Activated CD4-positive, alpha-beta T cell treated with anti-CD3 and anti-CD28 coated beads for 36 hours (primary cell): ENCODE measurements at regions of chr1 and their contacts with region 1.

Region 1: DNA sequence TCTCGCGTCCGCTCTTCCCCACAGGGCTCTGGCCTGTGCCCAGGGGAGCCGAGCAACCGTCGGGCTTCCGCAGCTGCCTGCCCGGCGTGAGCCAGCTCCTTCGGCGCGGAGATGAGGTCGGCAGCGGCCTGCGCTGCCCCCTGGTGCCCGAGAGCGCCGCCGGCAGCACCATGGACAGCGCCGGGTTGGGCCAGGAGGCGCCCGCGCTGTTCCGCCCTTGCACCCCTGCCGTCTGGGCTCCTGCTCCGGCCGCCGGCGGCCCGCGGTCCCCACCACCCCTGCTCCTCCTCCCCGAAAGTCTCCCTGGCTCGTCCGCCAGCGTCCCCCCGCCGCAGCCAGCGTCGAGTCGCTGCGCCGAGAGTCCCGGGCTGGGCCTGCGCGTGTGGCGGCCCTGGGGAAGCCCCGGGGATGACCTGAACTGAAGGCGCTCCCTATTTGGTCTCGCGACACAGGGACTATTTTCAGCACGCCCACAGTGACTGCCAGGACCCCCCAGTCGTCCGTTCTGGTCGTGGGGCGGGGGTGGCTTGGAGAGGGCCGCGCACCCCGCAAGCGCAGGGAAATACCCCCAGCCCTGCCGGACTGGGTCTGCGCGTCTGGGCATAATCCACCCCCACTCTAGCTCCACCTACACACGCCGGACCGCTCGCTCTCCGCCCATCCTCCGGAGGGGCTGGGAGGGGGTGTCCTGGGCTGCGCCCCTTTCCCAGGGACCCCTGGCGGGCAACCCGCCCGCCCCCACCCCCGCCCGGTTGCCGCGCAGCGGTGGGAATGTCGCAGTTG is 1.3 kb downstream of the HES3 start:
- DNase-seq: peak; percentile 90
- ATAC-seq: peak; percentile 71
- H3K4me3 Mint-ChIP-seq: no peak overlapping the region
- H3K27ac Mint-ChIP-seq: no peak overlapping the region
- H3K4me1 Mint-ChIP-seq: peaks cover 11% of the 10 kb centered on the region
- H3K27me3 Mint-ChIP-seq: peaks cover 53% of the 10 kb centered on the region

Region 2: GRCh38 chr1:6108937-6109614 is 136.2 kb before region 1 on chr1:
- CTCF ChIA-PET with region 1: interaction called, 5 read pairs
- POLR2A ChIA-PET with region 1: no interaction called
- intact Hi-C with region 1: loop called (anchors 1 to 2 kb)
- DNase-seq: peak; percentile 75
- ATAC-seq: peak; percentile 97
- H3K4me3 Mint-ChIP-seq: no peak overlapping the region
- H3K27ac Mint-ChIP-seq: no peak overlapping the region
- H3K4me1 Mint-ChIP-seq: no peaks in the 10 kb centered on the region
- H3K27me3 Mint-ChIP-seq: peaks cover 11% of the 10 kb centered on the region

Region 3: DNA sequence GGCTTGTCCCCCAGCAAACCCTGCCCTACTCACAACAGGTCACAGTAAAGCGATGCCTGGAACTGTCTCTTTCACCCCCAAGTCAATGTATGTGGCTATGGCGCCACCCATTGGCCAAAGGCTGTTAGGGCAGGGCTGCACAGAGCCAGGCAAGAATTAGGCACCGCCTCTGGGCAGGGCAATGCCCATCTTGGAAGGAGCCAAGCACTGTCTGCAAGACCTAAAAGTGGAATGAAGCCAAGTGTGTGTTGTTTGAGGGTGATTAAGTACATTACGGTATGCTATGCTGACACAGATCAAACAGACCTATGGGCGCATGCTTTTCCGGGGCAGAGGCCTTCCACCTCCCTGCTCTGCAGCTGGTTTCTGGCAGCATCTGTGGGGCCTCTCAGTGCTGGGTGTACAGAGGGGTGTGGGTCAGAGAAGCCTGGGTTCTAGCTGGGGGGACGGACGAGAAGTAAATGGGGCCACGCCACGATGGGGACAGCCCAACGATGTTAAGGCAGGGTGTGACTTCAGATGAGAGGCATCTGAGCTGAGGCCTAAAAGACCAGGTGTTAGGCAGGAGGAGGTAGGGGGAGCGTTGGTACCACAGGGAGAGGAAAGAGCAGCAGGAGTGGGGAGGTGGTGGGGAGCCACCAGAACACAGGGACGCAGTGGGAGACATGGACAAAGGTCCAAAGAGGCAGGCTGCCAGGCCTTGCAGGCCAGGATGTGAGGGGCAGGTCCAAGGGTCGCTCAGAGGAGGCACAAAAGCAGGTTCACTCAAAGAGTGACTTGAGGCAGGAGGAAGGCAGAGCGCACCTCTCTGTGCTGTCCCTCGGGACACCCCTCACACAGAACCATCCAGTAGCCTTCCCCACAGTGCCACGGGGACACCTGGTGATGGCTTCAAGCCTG is 98.5 kb after region 1 on chr1:
- CTCF ChIA-PET with region 1: interaction called, 13 read pairs
- POLR2A ChIA-PET with region 1: no interaction called
- intact Hi-C with region 1: loop called (anchors 1 kb)
- DNase-seq: peak; percentile 83
- ATAC-seq: peak; percentile 83
- H3K4me3 Mint-ChIP-seq: no peak overlapping the region
- H3K27ac Mint-ChIP-seq: no peak overlapping the region
- H3K4me1 Mint-ChIP-seq: peaks cover 10% of the 10 kb centered on the region
- H3K27me3 Mint-ChIP-seq: no peaks in the 10 kb centered on the region

Region 4: GRCh38 chr1:6423321-6423999 is 178.2 kb after region 1 on chr1:
- CTCF ChIA-PET with region 1: interaction called, 35 read pairs
- POLR2A ChIA-PET with region 1: no interaction called
- intact Hi-C with region 1: loop called in 1 of 2 experiments (anchors 5 kb)
- DNase-seq: peak; percentile 87
- ATAC-seq: peak; percentile 83
- H3K4me3 Mint-ChIP-seq: peak overlapping the region; percentile 7
- H3K27ac Mint-ChIP-seq: no peak overlapping the region
- H3K4me1 Mint-ChIP-seq: peaks cover 12% of the 10 kb centered on the region
- H3K27me3 Mint-ChIP-seq: peaks cover 36% of the 10 kb centered on the region

Region 5: DNA sequence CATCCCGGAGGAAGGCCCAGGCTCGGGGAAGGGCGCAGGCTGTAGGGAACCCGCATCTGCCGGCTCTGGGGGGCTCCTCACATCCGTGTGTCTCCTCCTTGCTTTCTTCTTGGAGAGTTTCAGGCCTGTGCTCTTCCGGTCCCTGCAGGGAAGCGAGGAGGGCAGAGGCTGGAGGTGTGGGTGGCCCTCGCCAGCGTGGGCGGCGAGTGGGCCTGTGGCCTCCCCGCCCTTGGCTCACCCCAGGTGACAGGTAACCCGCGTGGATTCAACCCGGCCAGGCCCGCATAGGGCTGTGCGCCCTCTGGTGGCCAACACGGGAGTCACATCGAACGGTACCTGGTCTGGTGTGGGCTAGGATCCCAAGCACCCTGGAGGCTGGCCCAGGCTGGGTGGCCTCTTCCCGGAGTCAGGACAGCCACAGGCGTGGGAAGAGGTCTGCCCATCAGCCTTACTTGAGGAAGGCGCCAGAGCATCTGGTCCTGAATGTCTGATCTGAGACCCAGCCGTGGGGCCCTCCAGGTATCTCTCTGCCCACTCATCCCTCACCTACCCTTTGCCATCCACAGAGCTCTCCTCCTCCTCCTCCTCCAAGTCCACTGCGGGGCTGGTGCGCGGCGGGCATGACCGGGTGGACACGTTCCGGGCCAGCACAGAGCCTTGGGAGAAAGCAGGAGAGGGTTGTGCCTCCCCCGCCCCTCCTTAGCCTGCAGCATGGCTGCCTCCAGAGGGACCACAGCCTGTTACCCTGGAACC is 230.3 kb after region 1 on chr1:
- CTCF ChIA-PET with region 1: no interaction called
- POLR2A ChIA-PET with region 1: no interaction called
- intact Hi-C with region 1: loop called in 1 of 2 experiments (anchors 1 kb)
- DNase-seq: peak; percentile 84
- ATAC-seq: peak; percentile 94
- H3K4me3 Mint-ChIP-seq: no peak overlapping the region
- H3K27ac Mint-ChIP-seq: no peak overlapping the region
- H3K4me1 Mint-ChIP-seq: peaks cover 2% of the 10 kb centered on the region
- H3K27me3 Mint-ChIP-seq: no peaks in the 10 kb centered on the region